Activated T-helper 2 cell treated with anti-CD3 and anti-CD28 coated beads, Interferon-gamma antibody, Interleukin-2, Interleukin-4, amounts not matched to agents 10 μg/mL and 5 μg/mL and 100 μg/mL, durations not matched to agents 14 hours and 24 hours and 36 hours (primary cell): ENCODE measurements at regions of chr17 and their contacts with region 1.

Region 1: DNA sequence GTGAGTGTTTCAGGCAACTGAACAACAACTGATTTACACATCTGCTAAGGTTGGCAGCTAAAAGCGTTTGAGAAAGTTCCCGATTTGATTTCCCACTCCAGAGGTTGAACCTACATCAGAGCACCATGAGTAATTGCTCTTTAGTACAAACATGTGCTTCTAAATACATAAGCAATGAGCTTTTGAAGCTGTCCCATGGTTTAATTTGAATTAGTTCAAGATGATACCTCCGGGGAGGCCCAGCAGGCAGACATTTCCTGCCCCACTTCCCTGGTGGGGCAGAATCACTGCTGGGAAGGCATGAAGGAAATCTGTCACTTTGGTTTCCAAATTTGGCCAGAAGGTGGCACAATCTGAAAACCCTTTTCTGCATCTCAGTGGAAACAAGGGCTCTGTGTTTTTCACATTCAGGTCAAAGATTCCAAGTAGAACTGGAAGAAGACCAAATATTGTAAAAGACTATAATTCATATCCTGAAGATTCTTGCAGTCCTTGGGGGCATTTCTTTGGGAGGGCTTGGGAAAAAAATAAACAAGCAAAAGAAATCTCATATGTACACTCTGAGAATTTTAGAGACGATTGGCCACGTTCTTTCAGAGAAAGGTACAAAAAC is 176.2 kb upstream of the FAM20A start:
- DNase-seq: no peak
- H3K4me3 Mint-ChIP-seq: no peak overlapping the region
- H3K27ac Mint-ChIP-seq: no peak overlapping the region
- H3K4me1 Mint-ChIP-seq: peaks cover 5% of the 10 kb centered on the region
- H3K27me3 Mint-ChIP-seq: no peaks in the 10 kb centered on the region

Region 2: DNA sequence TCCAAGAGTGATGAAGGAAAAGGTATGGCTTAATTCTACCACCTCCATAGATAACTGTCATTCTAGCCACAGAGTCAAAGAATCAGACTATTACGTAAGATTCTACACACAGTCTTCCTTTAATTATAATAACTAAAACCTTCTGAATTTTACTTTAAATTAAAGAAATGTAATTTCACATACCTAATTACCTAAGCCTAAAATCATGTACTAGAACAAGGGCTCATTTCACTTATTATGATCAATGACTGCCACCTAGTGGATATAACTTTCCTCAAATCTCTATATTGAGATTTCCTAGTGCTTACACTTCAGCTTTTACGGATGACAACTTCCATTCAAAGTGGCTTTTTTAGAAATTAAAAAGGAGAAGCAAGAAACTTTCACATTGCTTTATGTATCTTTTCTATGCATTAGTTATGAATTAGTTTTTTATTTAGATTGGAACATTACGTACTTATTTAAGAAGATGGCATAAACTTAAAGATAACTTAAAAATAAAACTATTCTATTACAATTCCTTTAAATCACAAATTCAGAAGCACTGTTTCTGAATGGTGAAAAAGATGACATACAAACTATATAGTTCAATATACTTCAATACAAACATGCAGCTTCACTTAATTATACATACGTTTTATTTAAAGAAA is 469.5 kb after region 1 on chr17:
- intact Hi-C with region 1: loop called (anchors 2 kb)
- DNase-seq: no peak
- H3K4me3 Mint-ChIP-seq: no peak overlapping the region
- H3K27ac Mint-ChIP-seq: no peak overlapping the region
- H3K4me1 Mint-ChIP-seq: no peaks in the 10 kb centered on the region
- H3K27me3 Mint-ChIP-seq: no peaks in the 10 kb centered on the region